IMR-90 (cell line): ENCODE measurements at regions of chr7 and their contacts with region 1.

Region 1: DNA sequence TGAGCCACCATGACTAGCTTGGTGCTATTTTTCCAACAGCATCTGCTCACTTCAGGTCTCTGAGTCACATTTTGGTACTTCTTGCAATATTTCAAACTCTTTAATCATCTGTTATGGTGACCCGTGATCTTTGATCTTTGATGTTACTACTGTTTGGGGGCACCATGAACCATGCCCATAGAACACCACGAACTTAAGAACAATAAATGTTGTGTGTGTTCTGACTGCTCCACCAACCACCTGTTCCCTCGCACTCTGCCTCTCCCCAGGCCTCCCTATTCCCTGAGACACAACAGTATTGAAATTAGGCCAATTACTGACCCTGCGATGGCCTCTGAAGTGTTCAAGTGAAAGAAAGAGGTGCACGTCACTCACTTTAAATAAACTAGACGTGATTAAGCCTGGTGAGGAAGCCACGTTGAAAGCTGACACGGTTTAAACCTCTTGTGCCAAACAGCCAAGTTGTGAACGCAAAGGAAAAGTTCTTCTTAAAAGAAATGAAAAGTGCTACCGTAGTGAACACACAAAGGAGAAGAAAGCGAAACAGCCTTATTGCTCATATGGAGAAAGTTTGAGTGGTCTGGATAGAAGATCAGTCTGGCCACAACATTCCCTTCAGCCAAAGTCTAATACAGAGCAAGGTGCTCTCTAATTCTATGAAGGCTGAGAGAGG is 27.2 kb upstream of the ATP6V0A4 start:
- DNase-seq: no peak
- ATAC-seq: no peak
- H3K4me3 ChIP-seq: no peak overlapping the region
- H3K27ac ChIP-seq: no peak overlapping the region
- H3K4me1 ChIP-seq: no peaks in the 10 kb centered on the region
- H3K27me3 ChIP-seq: no peaks in the 10 kb centered on the region
- CTCF ChIP-seq: no peak
- POLR2A ChIP-seq: no peak
- RAD21 ChIP-seq: no peak

Region 2: DNA sequence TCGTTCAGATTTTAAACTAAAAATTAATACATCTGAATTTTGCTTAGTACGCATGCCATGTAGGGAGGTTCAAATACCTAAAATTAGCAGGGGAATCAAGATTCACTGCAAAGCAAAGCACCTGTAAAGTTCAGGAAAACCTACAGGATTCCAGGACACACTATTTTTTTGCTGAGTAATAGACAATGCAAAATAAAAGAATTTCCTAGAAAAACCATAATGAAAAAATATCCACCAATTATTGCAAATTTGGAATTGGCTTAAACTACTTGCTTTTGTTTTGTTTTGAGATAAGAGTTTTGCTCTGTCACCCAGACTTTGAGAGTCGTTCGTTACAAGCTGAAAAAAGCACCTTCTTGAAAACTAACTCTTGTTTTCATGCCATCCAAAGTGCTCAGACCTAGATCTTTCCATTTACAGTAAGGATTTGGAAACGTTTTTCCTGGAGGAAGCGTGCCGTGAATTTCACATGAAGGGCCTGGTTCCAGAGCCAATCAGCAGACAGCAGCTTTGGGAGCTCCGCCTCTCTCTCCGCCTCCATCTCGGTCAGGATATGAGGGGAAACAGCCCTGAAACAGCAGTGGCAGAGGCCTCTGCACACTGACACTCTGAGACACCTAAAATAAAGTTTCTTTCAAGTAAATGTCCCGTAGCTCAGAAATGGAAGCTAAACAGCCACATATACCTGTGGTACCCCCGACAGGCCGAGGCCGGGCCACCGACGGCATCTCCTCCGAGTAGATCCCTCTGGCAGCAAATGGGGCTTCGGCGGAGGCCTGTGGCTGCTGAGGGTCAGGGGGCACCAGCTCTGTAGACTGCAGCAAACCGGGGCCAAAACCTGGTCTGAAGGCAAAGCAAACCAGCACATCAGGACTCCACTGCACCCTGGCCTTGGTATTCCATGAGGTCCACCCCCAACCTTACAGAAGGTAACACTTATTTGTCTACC is 18.7 kb after region 1 on chr7:
- CTCF ChIA-PET with region 1: no interaction called
- POLR2A ChIA-PET with region 1: no interaction called
- dilution Hi-C with region 1: no loop called
- in situ Hi-C with region 1: no loop called
- intact Hi-C with region 1: loop called (anchors 2 kb)
- DNase-seq: no peak
- ATAC-seq: no peak
- H3K4me3 ChIP-seq: no peak overlapping the region
- H3K27ac ChIP-seq: no peak overlapping the region
- H3K4me1 ChIP-seq: peaks cover 2% of the 10 kb centered on the region; the same call in 1 of the 2 replicates
- H3K27me3 ChIP-seq: no peaks in the 10 kb centered on the region
- CTCF ChIP-seq: no peak
- POLR2A ChIP-seq: no peak
- RAD21 ChIP-seq: no peak